ENCODE measurements at regions of chr10 and their contacts with region 1.

Region 1: GRCh38 chr10:94235461-94235860 is 127.3 kb downstream of the NOC3L start:
- DNase-seq: no peak
- ATAC-seq: no peak
- H3K4me3 ChIP-seq: no peak overlapping the region
- H3K27ac ChIP-seq: no peak overlapping the region
- H3K4me1 ChIP-seq: no peaks in the 10 kb centered on the region
- H3K27me3 ChIP-seq: no peaks in the 10 kb centered on the region

Region 2: DNA sequence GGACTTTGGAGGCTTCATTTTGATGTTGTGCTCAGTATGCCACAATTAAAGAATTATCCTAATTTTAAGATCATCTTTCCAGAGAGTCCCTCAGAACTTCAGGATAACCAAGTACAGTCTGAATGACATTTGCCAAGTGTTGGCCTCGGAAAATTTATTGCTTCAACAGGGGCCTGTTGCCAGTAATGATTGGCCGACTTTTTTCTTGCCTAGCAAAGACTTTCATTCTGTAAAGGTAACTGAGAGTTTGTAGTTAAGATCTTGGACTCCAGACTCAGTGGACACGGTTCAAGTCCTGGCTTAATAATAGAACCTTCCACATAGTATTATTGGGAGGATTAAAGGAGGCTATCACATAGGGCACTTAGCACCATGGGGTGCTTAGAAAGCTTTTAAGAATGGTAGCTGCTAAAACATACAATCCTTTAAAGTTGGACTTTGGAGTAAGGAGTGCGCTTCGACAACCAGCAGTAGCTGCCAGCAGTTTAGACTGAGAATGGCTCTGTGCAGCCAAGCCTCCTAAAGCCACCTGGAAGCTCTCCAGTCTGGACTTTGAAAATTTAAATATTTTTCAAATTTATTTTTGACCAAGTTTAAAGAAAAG is 151.7 kb before region 1 on chr10:
- intact Hi-C with region 1: loop called in 1 of 2 experiments (anchors 5 kb)
- DNase-seq: no peak
- ATAC-seq: no peak
- H3K4me3 ChIP-seq: no peak overlapping the region
- H3K27ac ChIP-seq: no peak overlapping the region
- H3K4me1 ChIP-seq: peaks cover 0 to 4% of the 10 kb centered on the region in 2 donors
- H3K27me3 ChIP-seq: no peaks in the 10 kb centered on the region

Region 3: GRCh38 chr10:94308866-94309265 is 73.4 kb after region 1 on chr10:
- intact Hi-C with region 1: no loop called
- DNase-seq: no peak
- ATAC-seq: no peak
- H3K4me3 ChIP-seq: no peak overlapping the region
- H3K27ac ChIP-seq: no peak overlapping the region
- H3K4me1 ChIP-seq: no peaks in the 10 kb centered on the region
- H3K27me3 ChIP-seq: no peaks in the 10 kb centered on the region

Measured in aorta (tissue), 5 donors.